ENCODE measurements at regions of chr11 and their contacts with region 1.

Region 1: DNA sequence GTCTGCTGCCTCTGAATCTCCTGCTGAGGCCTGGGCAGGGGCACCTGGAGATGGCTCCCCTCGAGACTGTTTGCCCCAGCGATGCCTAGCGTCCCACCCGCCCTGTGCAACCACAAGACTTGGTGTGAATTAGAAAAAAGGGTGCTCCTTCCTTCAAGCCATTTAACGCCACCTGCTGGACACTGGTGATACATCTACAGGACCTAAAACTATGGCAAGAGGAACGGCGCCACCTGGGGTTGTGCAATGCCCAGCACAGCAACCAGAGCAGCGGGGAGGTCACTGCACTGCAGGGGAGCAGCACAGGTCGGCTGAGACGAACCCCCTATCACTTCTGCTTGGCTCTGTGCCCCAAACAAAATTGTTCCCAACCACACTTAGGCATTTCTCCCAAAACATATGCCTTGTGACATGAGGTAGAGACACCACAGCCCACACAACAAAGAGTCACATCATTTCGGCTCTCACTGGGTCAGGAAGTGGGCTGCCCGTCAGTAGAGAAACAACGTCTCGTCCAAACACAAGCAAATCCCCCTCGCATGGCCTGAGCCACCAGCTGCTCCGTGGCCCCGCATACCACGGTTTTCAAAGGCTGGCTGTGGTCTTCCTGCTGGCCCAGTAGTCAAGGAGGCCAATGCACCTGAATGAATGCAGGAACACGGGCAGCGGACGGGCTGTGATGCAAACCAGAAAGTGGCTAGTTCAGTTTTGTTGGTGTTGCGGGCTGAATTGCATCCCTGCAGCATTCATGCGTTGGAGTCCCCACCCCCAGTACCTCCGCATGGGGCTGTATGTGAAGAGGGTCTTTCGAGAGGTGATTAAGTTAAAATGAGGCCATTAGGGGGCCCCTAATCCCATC is 171.9 kb downstream of the SHANK2 start:
- DNase-seq: peak; percentile 59
- ATAC-seq: peak; percentile 91
- H3K4me3 ChIP-seq: no peak overlapping the region
- H3K27ac ChIP-seq: no peak overlapping the region
- H3K4me1 ChIP-seq: no peaks in the 10 kb centered on the region
- H3K27me3 ChIP-seq: no peaks in the 10 kb centered on the region
- CTCF ChIP-seq: peak; percentile 97

Region 2: GRCh38 chr11:70467201-70468085 is 613.0 kb before region 1 on chr11:
- CTCF ChIA-PET with region 1: no interaction called
- POLR2A ChIA-PET with region 1: no interaction called
- in situ Hi-C with region 1: no loop called
- intact Hi-C with region 1: loop called (anchors 1 kb)
- DNase-seq: peak; percentile 35
- ATAC-seq: peak; percentile 73
- H3K4me3 ChIP-seq: no peak overlapping the region
- H3K27ac ChIP-seq: no peak overlapping the region; the same call in 1 of the 2 replicates
- H3K4me1 ChIP-seq: peaks cover 5% of the 10 kb centered on the region
- H3K27me3 ChIP-seq: no peaks in the 10 kb centered on the region
- CTCF ChIP-seq: peak; percentile 97

Region 3: DNA sequence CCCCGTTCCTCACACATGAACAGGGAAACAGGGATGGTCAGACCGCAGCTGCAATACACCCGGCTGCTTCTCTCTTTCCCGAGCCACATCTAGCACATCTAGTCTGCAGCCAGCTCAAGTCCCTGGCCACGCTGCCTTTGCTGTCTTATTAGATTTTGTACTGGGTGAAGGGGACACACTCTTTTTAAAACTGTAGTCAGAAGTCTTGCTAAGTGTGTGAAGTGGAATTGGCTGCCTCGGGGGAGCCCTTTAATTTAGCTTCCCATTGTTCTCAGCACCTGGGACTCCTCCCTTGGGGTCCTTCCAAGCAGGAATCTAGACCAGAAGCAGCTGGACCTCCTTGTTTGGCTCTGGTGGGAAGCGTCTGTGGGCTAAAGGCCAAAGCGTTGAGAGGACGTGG is 262.1 kb before region 1 on chr11:
- CTCF ChIA-PET with region 1: no interaction called
- POLR2A ChIA-PET with region 1: no interaction called
- in situ Hi-C with region 1: no loop called
- intact Hi-C with region 1: loop called (anchors 5 kb)
- DNase-seq: no peak
- ATAC-seq: no peak
- H3K4me3 ChIP-seq: no peak overlapping the region
- H3K27ac ChIP-seq: no peak overlapping the region
- H3K4me1 ChIP-seq: no peaks in the 10 kb centered on the region
- H3K27me3 ChIP-seq: no peaks in the 10 kb centered on the region
- CTCF ChIP-seq: no peak

Region 4: GRCh38 chr11:71062199-71062598 is 18.3 kb before region 1 on chr11:
- CTCF ChIA-PET with region 1: interaction called, 12 read pairs
- POLR2A ChIA-PET with region 1: no interaction called
- in situ Hi-C with region 1: no loop called
- intact Hi-C with region 1: no loop called
- DNase-seq: no peak
- ATAC-seq: no peak
- H3K4me3 ChIP-seq: no peak overlapping the region
- H3K27ac ChIP-seq: no peak overlapping the region
- H3K4me1 ChIP-seq: no peaks in the 10 kb centered on the region
- H3K27me3 ChIP-seq: no peaks in the 10 kb centered on the region
- CTCF ChIP-seq: no peak

Region 5: GRCh38 chr11:71164186-71164585 is 83.7 kb after region 1 on chr11:
- CTCF ChIA-PET with region 1: no interaction called
- POLR2A ChIA-PET with region 1: no interaction called
- in situ Hi-C with region 1: no loop called
- intact Hi-C with region 1: no loop called
- DNase-seq: no peak
- ATAC-seq: no peak
- H3K4me3 ChIP-seq: no peak overlapping the region
- H3K27ac ChIP-seq: no peak overlapping the region
- H3K4me1 ChIP-seq: no peaks in the 10 kb centered on the region
- H3K27me3 ChIP-seq: no peaks in the 10 kb centered on the region
- CTCF ChIP-seq: no peak